ENCODE measurements at regions of chr4 and their contacts with region 1.

Region 1: GRCh38 chr4:150986085-150986484 is 29.0 kb downstream of the LRBA start:
- DNase-seq: no peak
- H3K4me3 Mint-ChIP-seq: no peak overlapping the region
- H3K27ac Mint-ChIP-seq: peak overlapping the region; percentile 80
- H3K4me1 Mint-ChIP-seq: peaks cover 29% of the 10 kb centered on the region
- H3K27me3 Mint-ChIP-seq: no peaks in the 10 kb centered on the region

Region 2: DNA sequence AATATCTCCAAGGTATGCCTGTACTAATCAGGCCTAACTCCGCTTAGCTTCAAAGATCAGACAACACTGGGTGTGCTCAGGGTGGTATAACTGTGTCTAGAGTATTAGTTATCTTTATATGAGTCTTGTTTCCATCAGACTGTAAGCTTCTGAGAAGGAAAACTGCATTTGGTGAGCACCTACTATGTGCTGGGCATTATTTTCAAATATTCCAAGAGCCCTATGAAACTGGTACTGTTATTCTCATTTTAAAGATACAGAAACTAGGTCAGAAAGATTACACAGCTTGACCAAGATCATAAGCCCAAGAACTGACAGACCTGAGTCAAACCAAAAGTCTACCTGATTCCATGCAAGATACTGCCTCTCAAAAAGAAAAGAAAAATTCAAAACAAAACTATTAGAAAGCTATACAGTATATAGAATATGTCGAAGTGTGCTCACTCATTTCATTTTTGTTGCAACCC is 15.4 kb before region 1 on chr4:
- intact Hi-C with region 1: loop called (anchors 1 kb)
- DNase-seq: no peak
- H3K4me3 Mint-ChIP-seq: no peak overlapping the region
- H3K27ac Mint-ChIP-seq: peak overlapping the region; percentile 1
- H3K4me1 Mint-ChIP-seq: peaks cover 45% of the 10 kb centered on the region
- H3K27me3 Mint-ChIP-seq: no peaks in the 10 kb centered on the region

Region 3: GRCh38 chr4:151099229-151099975 is 113.3 kb after region 1 on chr4 and contains the start of gene RPS3A:
- intact Hi-C with region 1: no loop called
- DNase-seq: peak; percentile 98
- H3K4me3 Mint-ChIP-seq: peak within 1 kb of the TSS; percentile 97
- H3K27ac Mint-ChIP-seq: peak within 1 kb of the TSS; percentile 98
- H3K4me1 Mint-ChIP-seq: peaks cover 56% of the 10 kb centered on the region
- H3K27me3 Mint-ChIP-seq: peaks cover 3% of the 10 kb centered on the region
- total RNA-seq, gene RPS3A: 1,686 and 1,760 TPM in 2 replicates

Region 4: GRCh38 chr4:151376540-151376939 is 390.5 kb after region 1 on chr4:
- intact Hi-C with region 1: no loop called
- DNase-seq: no peak
- H3K4me3 Mint-ChIP-seq: no peak overlapping the region
- H3K27ac Mint-ChIP-seq: no peak overlapping the region
- H3K4me1 Mint-ChIP-seq: no peaks in the 10 kb centered on the region
- H3K27me3 Mint-ChIP-seq: no peaks in the 10 kb centered on the region

Region 5: DNA sequence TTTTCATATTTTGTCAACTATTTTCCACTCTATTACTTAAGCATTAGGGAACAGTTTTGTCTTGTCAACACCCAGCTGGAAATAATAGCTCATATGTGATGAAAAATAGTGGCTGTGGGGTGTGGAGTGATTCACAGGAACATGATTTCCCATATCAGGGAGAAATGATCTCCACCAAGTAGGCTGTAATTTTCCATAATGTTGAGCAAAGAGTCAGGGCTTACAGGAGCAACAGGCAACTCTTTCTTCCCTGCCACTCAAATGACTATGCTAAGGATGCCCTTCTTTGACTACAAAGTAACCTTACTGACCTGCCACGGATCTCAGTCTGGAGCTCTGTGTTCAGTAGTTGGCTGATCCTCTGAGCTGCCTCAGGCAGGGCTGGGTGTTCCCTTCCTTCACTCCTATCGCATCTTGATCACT is 864.7 kb after region 1 on chr4:
- intact Hi-C with region 1: no loop called
- DNase-seq: no peak
- H3K4me3 Mint-ChIP-seq: no peak overlapping the region
- H3K27ac Mint-ChIP-seq: no peak overlapping the region
- H3K4me1 Mint-ChIP-seq: no peaks in the 10 kb centered on the region
- H3K27me3 Mint-ChIP-seq: peaks cover 11% of the 10 kb centered on the region